ENCODE measurements at regions of chr7 and their contacts with region 1.

Region 1: GRCh38 chr7:26078437-26079336 is 73.3 kb upstream of the NFE2L3 start:
- DNase-seq: peak; percentile 68
- CTCF ChIP-seq: peak; percentile 60

Region 2: DNA sequence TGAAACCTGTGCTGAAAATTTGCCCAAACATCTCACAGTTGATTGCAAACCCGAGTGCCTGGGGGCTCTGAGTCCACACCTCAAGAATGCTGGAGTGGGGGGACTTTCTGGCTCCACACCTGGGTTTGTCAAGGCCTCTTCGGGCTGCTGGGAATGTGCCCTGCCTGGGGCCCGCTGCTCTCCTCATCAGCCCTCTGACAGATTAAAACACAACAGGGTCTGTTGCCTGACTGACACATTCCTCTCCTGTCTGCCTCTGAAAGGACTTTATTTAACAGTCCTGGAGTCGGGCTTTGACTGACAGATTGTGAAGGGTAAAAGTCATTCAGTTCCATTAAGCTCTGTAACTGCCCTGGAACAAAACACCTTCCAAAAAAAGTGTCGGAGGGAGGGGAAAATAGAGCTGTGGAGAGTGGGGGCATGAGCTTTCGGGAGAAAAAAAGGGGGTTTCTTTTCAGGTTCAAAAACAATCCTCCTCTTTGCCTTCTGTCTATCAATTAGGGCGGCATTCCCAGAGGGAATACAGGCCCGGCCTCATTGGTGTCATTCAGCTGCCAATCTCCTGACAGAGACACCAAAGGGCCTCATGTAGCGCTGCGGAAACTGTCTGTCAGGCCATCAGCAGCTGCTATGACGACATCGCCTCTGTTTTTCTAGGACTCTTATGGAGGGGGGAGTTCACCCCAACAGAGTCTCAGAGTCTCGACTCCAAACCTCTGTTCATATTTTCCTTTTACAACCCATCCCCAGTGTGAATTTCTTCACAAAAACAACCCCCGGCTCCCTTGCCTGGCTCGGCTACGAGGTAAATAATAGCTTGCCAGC is 325.5 kb before region 1 on chr7:
- in situ Hi-C with region 1: no loop called
- DNase-seq: no peak
- CTCF ChIP-seq: no peak

Region 3: DNA sequence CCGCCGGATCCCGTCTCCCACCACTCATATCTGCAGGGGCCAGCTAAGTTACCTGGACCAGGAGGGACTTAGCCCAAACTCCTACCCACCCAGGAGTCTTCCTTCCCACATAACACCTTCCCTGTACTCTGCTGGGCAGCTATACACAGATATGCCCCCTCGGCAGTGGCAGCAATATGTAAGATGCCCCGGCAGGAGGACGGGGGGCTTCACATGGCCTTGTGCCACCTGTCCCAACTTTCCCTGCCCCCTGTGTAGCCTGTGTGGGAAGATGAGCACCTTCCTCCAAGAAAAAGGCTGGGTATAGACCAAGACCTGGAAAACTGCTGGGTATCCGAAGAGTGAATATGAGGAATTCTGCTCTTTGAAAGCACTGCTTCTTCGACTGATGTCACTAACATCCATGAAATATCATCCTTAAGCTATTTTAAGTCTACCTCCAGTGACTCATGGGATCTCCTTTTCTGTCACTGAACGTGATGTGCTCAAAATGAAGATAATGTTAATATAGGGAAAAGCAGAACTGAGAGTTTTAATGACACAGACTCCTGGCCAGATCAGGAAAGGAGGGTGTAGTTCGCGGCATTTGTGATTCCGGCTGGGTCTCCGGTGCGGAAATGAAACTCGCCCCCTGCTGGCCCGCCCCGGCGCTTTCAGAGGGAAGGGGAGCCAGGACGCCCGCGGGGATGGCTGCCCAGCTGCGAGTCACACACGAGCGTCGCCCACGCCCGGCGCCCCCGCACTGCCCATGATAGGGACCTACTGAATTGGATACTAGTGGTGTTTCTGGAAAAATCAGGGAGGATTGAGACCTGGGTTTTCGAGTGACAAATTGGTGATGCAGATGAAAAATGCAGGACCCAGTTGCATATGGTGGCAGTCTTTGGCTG is 183.5 kb before region 1 on chr7:
- in situ Hi-C with region 1: loop called (anchors 10 kb)
- DNase-seq: peak; percentile 78
- CTCF ChIP-seq: peak; percentile 66

Region 4: DNA sequence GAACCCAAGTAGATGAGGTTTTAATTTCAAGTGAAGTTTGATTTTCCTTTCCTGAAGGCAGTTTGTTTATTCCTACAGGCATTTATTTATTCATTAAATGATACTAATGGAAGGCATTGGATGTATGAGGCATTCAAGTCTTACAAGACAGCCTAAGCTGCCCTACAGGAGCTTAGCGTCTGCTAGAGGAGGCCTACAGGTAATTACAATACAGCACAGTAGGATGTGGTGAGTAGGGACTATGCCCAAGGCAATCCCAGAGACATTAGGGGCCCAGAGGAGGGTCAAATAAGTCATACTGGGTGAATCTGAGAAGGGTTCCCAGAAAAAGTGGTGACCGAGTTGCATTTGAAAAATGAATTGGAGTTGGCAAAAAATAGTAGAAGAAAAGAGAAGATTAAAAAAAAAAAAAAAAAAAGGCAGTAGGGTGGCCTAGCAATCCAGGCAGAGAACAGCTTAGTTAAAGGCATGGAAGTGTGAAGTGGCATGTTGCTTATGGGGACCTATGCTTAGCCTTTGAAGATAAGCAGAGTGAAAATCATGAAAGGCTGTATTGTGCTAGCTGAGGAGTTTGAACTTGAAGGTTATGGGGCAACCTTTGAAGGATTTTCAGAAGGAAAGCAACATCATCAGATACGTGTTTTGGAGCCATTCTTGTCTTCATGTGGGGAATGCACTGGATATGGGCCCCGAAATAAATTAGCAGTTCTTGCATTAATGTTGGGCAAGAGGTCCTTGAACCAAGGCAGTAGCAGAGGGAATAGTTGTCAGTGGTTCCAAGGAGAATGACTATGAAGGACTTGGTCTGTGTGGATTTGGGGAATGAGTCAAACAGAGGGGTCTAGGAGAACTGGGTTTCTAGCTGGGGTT is 278.5 kb after region 1 on chr7:
- in situ Hi-C with region 1: loop called (anchors 5 kb)
- DNase-seq: no peak
- CTCF ChIP-seq: no peak